ENCODE measurements at regions of chr7 and their contacts with region 1.

Region 1: GRCh38 chr7:142782922-142783900 is 12.4 kb downstream of the PRSS2 start:
- DNase-seq: peak; percentile 88 to 89
- H3K4me3 ChIP-seq: peak overlapping the region in 2 of 4 experiments; percentile 19 to 50; a peak in 5 of 8 replicates
- H3K27ac ChIP-seq: no peak overlapping the region
- H3K4me1 ChIP-seq: no peaks in the 10 kb centered on the region; a peak in 1 of 7 replicates
- H3K27me3 ChIP-seq: no peaks in the 10 kb centered on the region
- CTCF ChIP-seq: peak; percentile 81 to 100 (median 97)
- EP300 ChIP-seq: no peak; a peak in 1 of 3 replicates
- POLR2A ChIP-seq: no peak
- RAD21 ChIP-seq: peak; percentile 99 to 100

Region 2: GRCh38 chr7:142496545-142497041 is 286.6 kb before region 1 on chr7:
- CTCF ChIA-PET with region 1: interaction called, 10 read pairs
- POLR2A ChIA-PET with region 1: no interaction called
- DNase-seq: no peak
- H3K4me3 ChIP-seq: no peak overlapping the region
- H3K27ac ChIP-seq: no peak overlapping the region
- H3K4me1 ChIP-seq: no peaks in the 10 kb centered on the region
- H3K27me3 ChIP-seq: no peaks in the 10 kb centered on the region
- CTCF ChIP-seq: peak; percentile 58 to 83 (median 78)
- EP300 ChIP-seq: no peak
- POLR2A ChIP-seq: no peak
- RAD21 ChIP-seq: peak; percentile 37 to 61

Region 3: GRCh38 chr7:142603870-142604448 is 179.3 kb before region 1 on chr7:
- CTCF ChIA-PET with region 1: interaction called, 102 read pairs
- POLR2A ChIA-PET with region 1: no interaction called
- DNase-seq: peak in 1 of 2 experiments; percentile 58
- H3K4me3 ChIP-seq: peak overlapping the region in 1 of 4 experiments; percentile 43; a peak in 1 of 8 replicates
- H3K27ac ChIP-seq: no peak overlapping the region
- H3K4me1 ChIP-seq: no peaks in the 10 kb centered on the region
- H3K27me3 ChIP-seq: no peaks in the 10 kb centered on the region
- CTCF ChIP-seq: peak in 2 of 3 experiments; percentile 75 to 77; a peak in 3 of 4 replicates
- EP300 ChIP-seq: no peak
- POLR2A ChIP-seq: no peak
- RAD21 ChIP-seq: peak; percentile 86

Region 4: GRCh38 chr7:142646386-142647140 is 136.6 kb before region 1 on chr7:
- CTCF ChIA-PET with region 1: interaction called, 12 read pairs
- POLR2A ChIA-PET with region 1: no interaction called
- DNase-seq: no peak
- H3K4me3 ChIP-seq: no peak overlapping the region
- H3K27ac ChIP-seq: no peak overlapping the region
- H3K4me1 ChIP-seq: no peaks in the 10 kb centered on the region
- H3K27me3 ChIP-seq: no peaks in the 10 kb centered on the region
- CTCF ChIP-seq: peak in 1 of 3 experiments; percentile 2; a peak in 1 of 4 replicates
- EP300 ChIP-seq: no peak
- POLR2A ChIP-seq: no peak
- RAD21 ChIP-seq: no peak

Region 5: GRCh38 chr7:142681314-142682092 is 101.7 kb before region 1 on chr7:
- CTCF ChIA-PET with region 1: interaction called, 21 read pairs
- POLR2A ChIA-PET with region 1: no interaction called
- DNase-seq: no peak
- H3K4me3 ChIP-seq: no peak overlapping the region
- H3K27ac ChIP-seq: no peak overlapping the region
- H3K4me1 ChIP-seq: no peaks in the 10 kb centered on the region
- H3K27me3 ChIP-seq: no peaks in the 10 kb centered on the region
- CTCF ChIP-seq: no peak
- EP300 ChIP-seq: no peak
- POLR2A ChIP-seq: no peak
- RAD21 ChIP-seq: no peak

Region 6: DNA sequence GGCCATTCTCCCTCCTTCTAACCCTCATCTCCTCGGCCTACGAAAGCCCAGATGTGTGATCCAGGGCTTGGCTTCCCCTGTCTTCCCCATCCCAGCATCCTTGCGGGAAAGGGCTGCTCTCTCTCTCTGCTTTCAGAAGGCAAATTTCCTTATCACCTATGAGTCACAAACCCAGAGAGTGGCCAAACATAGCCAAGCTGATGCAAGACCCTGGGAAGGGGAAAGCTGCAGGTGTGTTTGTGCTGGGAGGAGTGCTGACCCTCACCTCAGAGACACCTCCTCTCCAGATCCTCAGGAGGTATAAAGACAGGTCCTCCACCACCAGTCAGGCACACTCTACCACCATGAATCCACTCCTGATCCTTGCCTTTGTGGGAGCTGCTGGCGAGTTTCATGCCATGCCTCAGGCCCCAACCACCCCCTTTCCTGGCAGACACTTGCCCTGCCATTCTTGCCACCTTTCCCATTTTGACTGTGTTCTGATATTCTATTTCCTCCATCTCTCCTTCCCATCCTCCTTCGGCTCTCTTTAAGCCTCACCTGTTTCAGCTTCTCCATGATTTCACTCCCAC is 23.1 kb before region 1 on chr7:
- CTCF ChIA-PET with region 1: interaction called, 10 read pairs
- POLR2A ChIA-PET with region 1: no interaction called
- DNase-seq: no peak
- H3K4me3 ChIP-seq: no peak overlapping the region
- H3K27ac ChIP-seq: no peak overlapping the region
- H3K4me1 ChIP-seq: peaks cover 0 to 4% (median 0%) of the 10 kb centered on the region in 4 experiments; a peak in 1 of 7 replicates
- H3K27me3 ChIP-seq: no peaks in the 10 kb centered on the region
- CTCF ChIP-seq: no peak
- EP300 ChIP-seq: no peak
- POLR2A ChIP-seq: no peak
- RAD21 ChIP-seq: no peak

Region 7: DNA sequence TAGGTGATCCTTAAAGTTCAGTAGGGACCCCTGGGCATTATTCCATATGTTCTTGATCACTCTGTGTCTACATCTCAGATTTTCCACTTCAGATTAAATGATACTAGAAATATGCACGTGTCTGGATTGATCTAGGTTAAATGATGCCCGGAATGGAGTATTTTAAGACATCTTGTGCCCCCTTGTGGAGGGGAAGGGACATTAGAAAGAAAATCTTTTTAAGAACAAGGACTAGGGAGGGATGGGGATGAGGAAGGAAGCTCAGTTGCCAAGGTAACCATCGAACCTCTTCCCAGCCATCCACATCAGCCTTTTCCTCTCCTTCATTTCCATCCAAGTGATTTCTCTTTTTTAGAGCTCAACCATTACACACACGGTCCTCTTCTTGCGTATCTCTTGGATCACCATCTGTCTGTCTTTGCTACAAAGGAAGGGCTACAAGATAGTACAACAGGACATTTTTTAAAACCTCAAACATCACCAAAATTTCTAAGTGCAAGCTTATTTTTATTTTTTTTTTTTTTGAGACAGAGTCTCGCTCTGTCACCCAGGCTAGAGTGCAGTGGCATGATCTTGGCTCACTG is 28.0 kb after region 1 on chr7:
- CTCF ChIA-PET with region 1: interaction called, 430 read pairs
- POLR2A ChIA-PET with region 1: interaction called, 3 read pairs
- DNase-seq: no peak
- H3K4me3 ChIP-seq: no peak overlapping the region
- H3K27ac ChIP-seq: no peak overlapping the region
- H3K4me1 ChIP-seq: peaks cover 10 to 23% (median 17%) of the 10 kb centered on the region in 4 experiments
- H3K27me3 ChIP-seq: no peaks in the 10 kb centered on the region
- CTCF ChIP-seq: peak in 2 of 3 experiments; percentile 60 to 68; a peak in 3 of 4 replicates
- EP300 ChIP-seq: no peak
- POLR2A ChIP-seq: no peak
- RAD21 ChIP-seq: peak; percentile 65 to 78

Region 8: DNA sequence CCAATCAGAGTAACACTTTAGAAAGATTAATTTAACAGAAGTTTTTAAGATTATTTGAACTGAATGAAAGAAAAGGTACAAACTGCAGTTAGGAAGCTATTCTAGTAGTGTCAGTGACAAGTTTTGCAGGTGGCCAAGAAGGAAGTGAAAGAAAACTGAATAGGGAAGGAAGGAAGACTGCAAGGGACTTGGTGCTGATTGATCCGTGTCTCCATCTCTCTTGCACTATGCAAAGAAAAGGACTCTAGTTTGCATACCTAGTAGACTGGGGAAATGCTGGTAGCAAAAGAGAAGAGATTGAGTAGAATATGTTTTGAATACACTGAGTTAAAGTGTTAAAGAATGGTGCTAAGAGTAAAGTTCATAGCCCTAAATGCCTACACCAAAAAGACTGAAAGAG is 301.9 kb after region 1 on chr7:
- CTCF ChIA-PET with region 1: no interaction called
- POLR2A ChIA-PET with region 1: no interaction called
- DNase-seq: no peak
- H3K4me3 ChIP-seq: no peak overlapping the region
- H3K27ac ChIP-seq: no peak overlapping the region
- H3K4me1 ChIP-seq: no peaks in the 10 kb centered on the region
- H3K27me3 ChIP-seq: no peaks in the 10 kb centered on the region
- CTCF ChIP-seq: no peak
- EP300 ChIP-seq: no peak
- POLR2A ChIP-seq: no peak
- RAD21 ChIP-seq: no peak

Measured in H1 (cell line).